PC-9 (cell line): ENCODE measurements at regions of chr4 and their contacts with region 1.

Region 1: DNA sequence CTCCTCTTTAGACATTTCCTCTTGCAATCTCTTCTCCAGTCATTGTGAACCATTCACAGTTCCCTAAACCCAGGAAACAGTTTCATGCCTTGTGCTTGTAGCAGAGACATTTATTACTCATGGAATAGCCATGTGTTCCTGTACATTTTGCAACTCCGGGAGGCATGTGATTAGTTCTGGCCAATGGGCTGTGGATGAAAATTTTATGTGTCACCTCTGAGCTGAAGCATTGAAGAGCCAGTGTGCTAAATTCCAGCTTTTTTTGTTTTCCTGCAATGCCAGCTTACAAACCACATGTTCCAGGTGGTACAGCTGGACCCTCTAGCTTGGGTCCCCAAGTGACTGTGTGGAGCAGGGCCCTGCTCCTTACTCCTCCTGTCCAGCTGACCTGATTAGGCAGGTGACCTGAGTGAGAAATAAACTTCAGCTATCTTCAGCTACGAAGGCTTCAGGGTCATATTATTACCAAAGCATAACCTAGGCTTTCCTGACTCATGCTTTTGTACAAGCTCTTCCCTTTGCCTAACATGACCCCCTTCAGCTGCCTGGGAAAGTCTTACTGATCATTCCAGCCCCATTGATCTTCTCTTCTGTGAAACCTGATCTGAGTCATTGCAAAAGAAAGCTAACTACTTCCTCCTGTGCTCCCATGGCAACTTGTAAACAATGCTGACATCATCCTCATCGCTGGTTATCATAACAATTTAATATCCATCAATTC is 200.4 kb downstream of the PTTG2 start:
- DNase-seq: peak; percentile 63 to 96
- H3K4me3 ChIP-seq: peak overlapping the region; percentile 4; the same call in 1 of the 2 replicates
- H3K27ac ChIP-seq: peak overlapping the region; percentile 96
- H3K4me1 ChIP-seq: peaks cover 71% of the 10 kb centered on the region
- H3K27me3 ChIP-seq: no peaks in the 10 kb centered on the region
- CTCF ChIP-seq: no peak

Region 2: GRCh38 chr4:37953620-37954293 is 206.9 kb before region 1 on chr4:
- CTCF ChIA-PET with region 1: no interaction called
- POLR2A ChIA-PET with region 1: no interaction called
- intact Hi-C with region 1: no loop called
- DNase-seq: no peak
- H3K4me3 ChIP-seq: no peak overlapping the region
- H3K27ac ChIP-seq: no peak overlapping the region
- H3K4me1 ChIP-seq: no peaks in the 10 kb centered on the region
- H3K27me3 ChIP-seq: no peaks in the 10 kb centered on the region
- CTCF ChIP-seq: no peak

Region 3: GRCh38 chr4:38062088-38062893 is 98.4 kb before region 1 on chr4:
- CTCF ChIA-PET with region 1: no interaction called
- POLR2A ChIA-PET with region 1: interaction called, 10 read pairs
- intact Hi-C with region 1: no loop called
- DNase-seq: peak; percentile 58 to 70
- H3K4me3 ChIP-seq: no peak overlapping the region
- H3K27ac ChIP-seq: no peak overlapping the region
- H3K4me1 ChIP-seq: peaks cover 19% of the 10 kb centered on the region
- H3K27me3 ChIP-seq: no peaks in the 10 kb centered on the region
- CTCF ChIP-seq: peak; percentile 90

Region 4: GRCh38 chr4:38119668-38120385 is 40.8 kb before region 1 on chr4:
- CTCF ChIA-PET with region 1: interaction called, 5 read pairs
- POLR2A ChIA-PET with region 1: no interaction called
- intact Hi-C with region 1: loop called (anchors 2 kb)
- DNase-seq: peak; percentile 73 to 89
- H3K4me3 ChIP-seq: peak overlapping the region; percentile 16; the same call in 1 of the 2 replicates
- H3K27ac ChIP-seq: peak overlapping the region; percentile 62
- H3K4me1 ChIP-seq: peaks cover 32% of the 10 kb centered on the region
- H3K27me3 ChIP-seq: no peaks in the 10 kb centered on the region
- CTCF ChIP-seq: no peak

Region 5: DNA sequence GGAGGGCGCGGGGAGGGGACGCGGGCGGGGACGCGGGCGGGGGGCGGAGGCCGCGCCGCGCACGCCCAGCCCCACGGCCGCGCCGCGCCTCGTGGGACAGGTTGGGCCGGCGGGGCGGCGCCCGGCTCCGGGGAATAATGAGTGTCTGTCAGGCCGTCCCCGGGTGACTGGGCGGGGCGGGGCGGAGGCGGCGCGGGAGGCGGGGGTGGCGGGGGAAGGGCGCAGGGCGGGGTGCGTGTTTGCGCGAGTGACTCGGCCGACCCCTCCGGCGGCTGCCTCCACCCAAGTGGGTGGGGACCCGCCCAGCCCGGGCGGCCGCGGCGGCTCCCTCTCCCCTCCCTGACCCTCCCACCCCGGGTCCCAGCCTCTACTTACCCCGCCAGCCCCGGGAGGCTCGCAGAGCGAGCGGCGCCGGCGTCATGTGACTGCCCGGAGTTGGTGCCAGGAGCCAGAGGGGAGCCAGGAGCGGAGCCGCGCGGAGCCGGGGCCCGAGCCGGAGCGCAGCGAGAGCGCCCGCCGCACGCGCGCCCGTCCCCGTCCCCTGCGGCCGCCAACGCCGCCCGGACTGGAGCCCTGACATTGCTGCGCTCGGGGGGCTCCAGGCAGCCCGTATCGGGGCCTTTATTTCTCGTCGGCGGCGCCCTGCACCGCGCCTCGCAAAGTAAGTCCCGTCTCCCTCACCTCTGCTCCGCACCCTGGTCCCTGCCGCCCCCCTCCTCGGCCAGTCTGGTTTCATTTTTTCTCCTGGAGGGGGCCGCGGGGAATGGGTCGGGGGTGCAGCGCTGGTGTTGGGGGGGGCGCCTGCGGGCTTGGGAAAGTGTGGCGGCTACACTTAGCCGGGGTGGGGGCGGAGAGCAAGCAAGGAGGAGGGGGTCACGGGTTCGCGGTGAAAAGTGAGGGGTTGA is 503.4 kb after region 1 on chr4 and contains the start of gene KLF3:
- CTCF ChIA-PET with region 1: no interaction called
- POLR2A ChIA-PET with region 1: no interaction called
- intact Hi-C with region 1: loop called (anchors 5 kb)
- DNase-seq: peak; percentile 59 to 92
- H3K4me3 ChIP-seq: peak within 1 kb of the TSS; percentile 72
- H3K27ac ChIP-seq: peak within 1 kb of the TSS; percentile 96
- H3K4me1 ChIP-seq: peaks cover 34% of the 10 kb centered on the region
- H3K27me3 ChIP-seq: no peaks in the 10 kb centered on the region
- CTCF ChIP-seq: no peak
- total RNA-seq, gene KLF3: 33.1 and 37.5 TPM in 2 replicates

Region 6: DNA sequence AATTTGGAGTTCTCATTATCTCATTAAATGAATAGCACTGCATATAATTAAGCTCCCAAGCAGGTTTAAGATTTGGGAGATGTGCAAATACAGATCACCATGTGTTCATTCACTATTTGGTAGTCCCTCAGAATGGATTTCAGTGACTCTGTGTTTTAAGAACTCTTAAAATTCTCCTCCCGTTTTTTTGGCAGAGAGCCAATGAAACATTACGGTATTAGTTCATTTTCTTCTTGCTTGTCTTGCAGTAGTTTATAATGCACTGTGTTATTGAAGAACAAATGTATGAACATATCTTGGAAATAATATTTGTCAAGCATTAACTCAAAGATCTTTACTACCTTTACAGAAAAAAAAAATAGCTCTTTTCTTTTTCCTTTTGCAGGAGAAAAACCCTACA is 536.0 kb after region 1 on chr4:
- CTCF ChIA-PET with region 1: no interaction called
- POLR2A ChIA-PET with region 1: no interaction called
- intact Hi-C with region 1: no loop called
- DNase-seq: no peak
- H3K4me3 ChIP-seq: no peak overlapping the region
- H3K27ac ChIP-seq: 0 out of 2 replicates have a peak overlapping the region, but pooled peaks have one; percentile 1
- H3K4me1 ChIP-seq: 0 out of 2 replicates have a peak, but pooled peaks cover 4% of the 10 kb centered on the region
- H3K27me3 ChIP-seq: no peaks in the 10 kb centered on the region
- CTCF ChIP-seq: no peak

Region 7: DNA sequence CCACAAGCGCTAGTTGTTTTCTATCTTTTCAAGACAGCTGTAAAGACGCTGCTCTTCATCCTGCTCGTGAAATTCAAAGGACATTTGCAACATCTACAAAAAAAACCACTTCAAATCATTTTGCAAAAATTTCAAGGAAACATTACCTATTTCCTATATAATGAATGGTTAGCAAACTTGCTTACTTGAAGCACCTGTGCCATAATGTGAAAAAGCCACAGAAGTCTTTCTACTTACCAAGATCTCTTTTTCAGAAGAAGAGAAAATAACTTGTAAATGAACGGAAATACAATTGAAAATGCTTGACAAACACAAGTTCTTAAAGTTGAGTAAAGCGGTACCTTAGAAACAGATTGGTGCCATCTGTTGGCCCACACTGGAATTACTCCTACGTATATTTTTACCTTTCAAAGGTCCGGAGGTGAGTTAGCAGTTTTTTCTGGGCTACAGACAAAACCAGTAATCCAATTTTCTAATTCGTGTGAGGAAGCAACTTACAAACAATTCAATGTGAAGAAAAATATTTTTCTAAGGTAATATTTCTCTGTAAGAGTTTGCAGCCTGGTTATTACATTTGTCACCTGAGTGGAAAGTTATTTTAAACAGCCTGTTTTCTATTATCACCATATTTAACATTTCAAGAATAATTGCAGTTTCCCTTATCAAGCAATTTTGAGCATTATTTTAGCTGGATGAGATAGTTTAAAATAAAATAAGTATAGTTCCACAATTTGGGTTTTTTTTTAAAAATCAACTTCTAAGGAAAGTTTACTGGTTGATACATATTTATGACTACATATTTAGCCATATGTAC is 696.1 kb after region 1 on chr4 and contains the start of gene TLR6:
- CTCF ChIA-PET with region 1: no interaction called
- POLR2A ChIA-PET with region 1: no interaction called
- intact Hi-C with region 1: loop called (anchors 5 kb)
- DNase-seq: peak; percentile 60 to 69
- H3K4me3 ChIP-seq: peak within 1 kb of the TSS; percentile 25; the same call in 1 of the 2 replicates
- H3K27ac ChIP-seq: peak within 1 kb of the TSS; percentile 93
- H3K4me1 ChIP-seq: peaks cover 26% of the 10 kb centered on the region
- H3K27me3 ChIP-seq: no peaks in the 10 kb centered on the region
- CTCF ChIP-seq: peak; percentile 83
- total RNA-seq, gene TLR6: 7.9 and 9.3 TPM in 2 replicates

Region 8: GRCh38 chr4:39044364-39044955 is 883.8 kb after region 1 on chr4:
- CTCF ChIA-PET with region 1: no interaction called
- POLR2A ChIA-PET with region 1: no interaction called
- intact Hi-C with region 1: loop called (anchors 5 kb)
- DNase-seq: peak; percentile 86 to 94
- H3K4me3 ChIP-seq: peak overlapping the region; percentile 85
- H3K27ac ChIP-seq: peak overlapping the region; percentile 98
- H3K4me1 ChIP-seq: peaks cover 53% of the 10 kb centered on the region
- H3K27me3 ChIP-seq: no peaks in the 10 kb centered on the region
- CTCF ChIP-seq: no peak